ENCODE measurements at regions of chr14 and their contacts with region 1.

Region 1: DNA sequence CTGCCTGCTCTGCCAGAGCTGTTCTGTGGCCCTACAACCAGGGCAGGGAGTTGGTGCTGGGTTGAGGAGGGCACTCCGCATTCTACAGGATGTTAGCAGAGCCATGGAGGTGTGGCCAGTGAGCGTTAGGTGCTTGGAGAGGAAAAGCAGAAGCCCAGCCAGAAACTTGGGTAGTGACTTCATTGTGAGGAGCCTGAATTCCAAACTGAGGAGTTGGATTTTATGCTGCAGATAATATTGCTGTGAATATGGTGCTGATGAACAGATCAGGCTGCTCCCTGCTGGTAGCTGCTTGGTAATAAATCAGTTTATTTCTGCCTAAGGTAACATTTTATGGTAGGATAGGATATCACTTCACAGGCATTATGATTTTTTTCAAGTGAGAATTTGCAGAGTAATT is 7.1 kb upstream of the CCDC175 start:
- H3K4me3 Mint-ChIP-seq: peak overlapping the region; percentile 69
- H3K27ac Mint-ChIP-seq: peak overlapping the region; percentile 84
- H3K4me1 Mint-ChIP-seq: peaks cover 28% of the 10 kb centered on the region
- H3K27me3 Mint-ChIP-seq: no peaks in the 10 kb centered on the region

Region 2: GRCh38 chr14:59483900-59484638 is 99.7 kb before region 1 on chr14 and contains the starts of genes JKAMP and L3HYPDH:
- intact Hi-C with region 1: loop called (anchors 5 kb)
- H3K4me3 Mint-ChIP-seq: peak within 1 kb of the TSS; percentile 85
- H3K27ac Mint-ChIP-seq: peak within 1 kb of the TSS; percentile 93
- H3K4me1 Mint-ChIP-seq: peaks cover 53% of the 10 kb centered on the region
- H3K27me3 Mint-ChIP-seq: no peaks in the 10 kb centered on the region

Measured in dendritic cell treated with granulocyte-macrophage colony-stimulating factor and Interleukin-4, amounts not matched to agents 40 ng/mL and 50 ng/mL, for 4 days (primary cell).